Colonic mucosa (tissue), 4 donors: ENCODE measurements at regions of chr6 and their contacts with region 1.

Region 1: GRCh38 chr6:33445119-33445603 is 9.2 kb upstream of the ZBTB9 start:
- DNase-seq: no peak
- H3K4me3 ChIP-seq: no peak overlapping the region
- H3K27ac ChIP-seq: no peak overlapping the region
- H3K4me1 ChIP-seq: no peaks in the 10 kb centered on the region
- H3K27me3 ChIP-seq: no peaks in the 10 kb centered on the region
- CTCF ChIP-seq: no peak

Region 2: DNA sequence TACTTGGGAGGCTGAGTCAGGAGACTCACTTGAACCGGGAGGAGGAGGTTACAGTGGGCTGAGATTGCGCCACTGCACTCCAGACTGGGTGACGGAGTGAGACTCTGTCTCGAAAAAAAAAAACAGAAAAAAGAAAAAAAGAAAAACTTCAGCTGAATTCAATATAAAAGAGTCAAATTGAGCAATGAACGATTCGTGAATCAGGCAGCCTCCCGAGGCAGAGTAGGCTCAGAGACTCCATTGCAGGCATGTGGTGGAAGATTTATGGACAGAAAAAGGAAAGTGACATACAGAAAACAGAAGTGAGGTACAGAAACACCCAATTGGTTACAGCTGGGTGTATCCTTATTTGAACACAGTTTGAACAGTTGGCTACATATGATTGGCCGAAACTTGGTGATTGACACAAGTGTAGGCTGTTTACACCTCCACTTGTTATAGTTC is 313.1 kb before region 1 on chr6:
- intact Hi-C with region 1: no loop called
- DNase-seq: no peak
- H3K4me3 ChIP-seq: no peak overlapping the region
- H3K27ac ChIP-seq: no peak overlapping the region
- H3K4me1 ChIP-seq: no peaks in the 10 kb centered on the region
- H3K27me3 ChIP-seq: no peaks in the 10 kb centered on the region
- CTCF ChIP-seq: no peak

Region 3: GRCh38 chr6:33566182-33567084 is 121.3 kb after region 1 on chr6:
- intact Hi-C with region 1: loop called (anchors 10 kb)
- DNase-seq: no peak
- H3K4me3 ChIP-seq: no peak overlapping the region
- H3K27ac ChIP-seq: no peak overlapping the region
- H3K4me1 ChIP-seq: no peaks in the 10 kb centered on the region
- H3K27me3 ChIP-seq: no peaks in the 10 kb centered on the region
- CTCF ChIP-seq: no peak